Aorta (tissue), 5 donors: ENCODE measurements at regions of chr2 and their contacts with region 1.

Region 1: GRCh38 chr2:53422979-53423378 is 344.6 kb upstream of the CHAC2 start:
- DNase-seq: no peak
- ATAC-seq: no peak
- H3K4me3 ChIP-seq: no peak overlapping the region
- H3K27ac ChIP-seq: no peak overlapping the region
- H3K4me1 ChIP-seq: no peaks in the 10 kb centered on the region
- H3K27me3 ChIP-seq: no peaks in the 10 kb centered on the region

Region 2: GRCh38 chr2:53515435-53516332 is 92.7 kb after region 1 on chr2:
- intact Hi-C with region 1: loop called in 1 of 2 experiments (anchors 5 kb)
- DNase-seq: no peak
- ATAC-seq: no peak
- H3K4me3 ChIP-seq: no peak overlapping the region
- H3K27ac ChIP-seq: no peak overlapping the region
- H3K4me1 ChIP-seq: no peaks in the 10 kb centered on the region
- H3K27me3 ChIP-seq: no peaks in the 10 kb centered on the region

Region 3: DNA sequence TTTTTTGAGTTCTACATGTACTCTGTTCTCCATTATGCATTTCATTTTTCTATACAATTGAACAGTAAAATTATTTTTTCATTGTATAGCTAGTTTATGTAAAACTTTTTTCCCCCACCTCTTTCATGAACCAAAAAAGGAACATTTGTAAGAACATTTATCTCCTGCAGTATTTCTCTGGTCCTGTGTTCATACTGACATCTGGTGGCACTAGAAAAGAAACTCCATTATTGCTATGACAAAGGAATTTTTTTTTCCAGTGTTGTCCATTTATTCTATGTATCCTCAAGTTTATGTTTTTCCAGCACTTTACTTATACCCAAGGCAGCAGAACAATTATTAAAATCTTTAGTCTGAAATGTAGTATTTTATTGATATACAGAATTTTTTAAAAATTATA is 317.2 kb after region 1 on chr2:
- intact Hi-C with region 1: loop called in 1 of 2 experiments (anchors 10 kb)
- DNase-seq: no peak
- ATAC-seq: no peak
- H3K4me3 ChIP-seq: no peak overlapping the region
- H3K27ac ChIP-seq: no peak overlapping the region
- H3K4me1 ChIP-seq: peaks cover 0 to 3% of the 10 kb centered on the region in 2 donors
- H3K27me3 ChIP-seq: no peaks in the 10 kb centered on the region